HEK293T (cell line): ENCODE measurements at regions of chr17 and their contacts with region 1.

Region 1: GRCh38 chr17:41548844-41549595 is 20.9 kb upstream of the KRT19 start:
- DNase-seq: peak; percentile 86

Region 2: DNA sequence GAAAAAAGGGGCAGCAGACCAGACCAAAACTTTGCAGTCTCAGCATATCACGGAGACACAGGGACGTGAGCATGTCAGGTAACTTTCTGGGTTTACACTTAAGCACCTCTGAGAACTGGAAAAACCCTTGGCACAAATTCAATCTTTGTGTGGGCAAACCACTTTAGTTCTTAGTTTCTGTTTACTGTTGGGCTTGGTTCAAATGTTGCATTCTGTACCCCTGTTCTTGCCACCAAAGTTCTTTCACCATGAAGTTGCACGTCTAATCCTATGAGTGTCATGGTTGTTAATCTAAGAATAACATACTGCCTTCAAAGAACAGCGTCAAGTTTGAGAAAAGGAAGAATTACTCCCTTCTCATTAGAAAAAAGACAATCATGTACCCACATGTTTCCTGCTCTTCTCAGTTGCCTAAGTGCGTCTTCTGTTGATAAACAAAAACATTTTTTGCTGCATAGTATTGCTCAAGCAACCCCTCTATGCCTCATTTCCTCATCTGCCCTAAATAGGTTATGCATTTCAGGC is 210.0 kb before region 1 on chr17:
- CTCF ChIA-PET with region 1: no interaction called
- POLR2A ChIA-PET with region 1: no interaction called
- DNase-seq: no peak

Region 3: GRCh38 chr17:41530062-41531051 is 18.7 kb before region 1 on chr17:
- CTCF ChIA-PET with region 1: interaction called, 26 read pairs
- POLR2A ChIA-PET with region 1: interaction called, 3 read pairs
- DNase-seq: peak; percentile 34

Region 4: DNA sequence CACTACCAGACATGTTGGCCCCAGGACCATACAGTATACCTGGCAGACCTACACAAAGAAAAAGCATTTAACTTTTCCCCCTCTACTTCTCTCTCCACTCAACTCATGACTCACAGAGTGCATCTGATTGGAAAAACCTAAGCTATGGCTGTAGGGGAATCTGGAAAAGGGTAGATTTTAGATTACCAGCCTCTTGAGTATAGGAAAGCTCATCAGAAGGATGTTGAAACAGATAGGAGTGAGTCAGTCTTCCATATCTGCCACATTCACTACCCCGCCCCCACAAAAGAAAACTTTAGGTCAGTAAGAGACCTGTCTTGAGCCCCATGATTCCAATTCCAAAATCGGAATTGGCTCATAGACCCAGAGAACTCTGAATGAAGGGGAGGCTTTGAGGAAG is 10.5 kb after region 1 on chr17:
- CTCF ChIA-PET with region 1: interaction called, 35 read pairs
- POLR2A ChIA-PET with region 1: interaction called, 3 read pairs
- DNase-seq: no peak

Region 5: DNA sequence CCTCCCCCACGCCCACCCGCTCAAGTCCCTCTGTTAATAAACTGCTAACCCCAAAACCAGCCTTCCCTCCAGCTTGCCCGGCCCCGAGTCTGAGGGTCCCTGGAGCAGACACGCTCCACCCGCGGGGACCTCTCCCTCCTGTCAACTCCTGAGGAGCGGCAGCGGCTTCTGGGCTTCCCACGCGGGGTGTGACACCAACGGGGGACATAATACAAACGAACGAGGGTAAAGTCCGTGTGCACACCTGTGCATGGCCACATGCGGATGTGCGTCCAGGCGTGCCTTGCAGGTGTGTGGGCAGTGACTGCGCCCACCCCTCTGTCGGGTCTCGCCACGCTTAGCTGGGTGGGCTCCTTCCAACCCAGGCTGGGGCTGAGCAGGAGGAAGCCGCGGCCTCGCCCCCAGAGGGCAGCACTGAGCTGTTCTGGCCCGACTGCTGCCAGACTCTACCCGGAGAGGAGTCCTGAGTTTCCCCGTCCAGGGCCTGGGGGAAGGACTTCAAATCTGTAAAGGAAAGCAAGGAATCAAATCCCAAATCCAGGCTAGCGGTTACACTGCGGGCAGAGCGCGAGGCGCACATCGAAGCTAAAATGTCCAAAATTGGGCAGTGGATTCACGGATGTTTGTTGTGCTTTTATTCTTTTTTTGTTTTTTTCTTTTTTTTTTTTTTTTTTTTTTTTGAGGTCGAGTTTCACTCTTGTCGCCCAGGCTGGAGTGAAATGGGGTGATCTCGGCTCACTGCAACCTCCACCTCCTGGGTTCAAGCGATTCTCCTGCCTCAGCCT is 99.6 kb after region 1 on chr17:
- CTCF ChIA-PET with region 1: interaction called, 63 read pairs
- POLR2A ChIA-PET with region 1: interaction called, 10 read pairs
- DNase-seq: peak; percentile 88

Region 6: GRCh38 chr17:41665566-41666236 is 116.7 kb after region 1 on chr17:
- CTCF ChIA-PET with region 1: interaction called, 83 read pairs
- POLR2A ChIA-PET with region 1: interaction called, 9 read pairs
- DNase-seq: peak; percentile 97